Caco-2 (cell line): ENCODE measurements at regions of chr20 and their contacts with region 1.

Region 1: DNA sequence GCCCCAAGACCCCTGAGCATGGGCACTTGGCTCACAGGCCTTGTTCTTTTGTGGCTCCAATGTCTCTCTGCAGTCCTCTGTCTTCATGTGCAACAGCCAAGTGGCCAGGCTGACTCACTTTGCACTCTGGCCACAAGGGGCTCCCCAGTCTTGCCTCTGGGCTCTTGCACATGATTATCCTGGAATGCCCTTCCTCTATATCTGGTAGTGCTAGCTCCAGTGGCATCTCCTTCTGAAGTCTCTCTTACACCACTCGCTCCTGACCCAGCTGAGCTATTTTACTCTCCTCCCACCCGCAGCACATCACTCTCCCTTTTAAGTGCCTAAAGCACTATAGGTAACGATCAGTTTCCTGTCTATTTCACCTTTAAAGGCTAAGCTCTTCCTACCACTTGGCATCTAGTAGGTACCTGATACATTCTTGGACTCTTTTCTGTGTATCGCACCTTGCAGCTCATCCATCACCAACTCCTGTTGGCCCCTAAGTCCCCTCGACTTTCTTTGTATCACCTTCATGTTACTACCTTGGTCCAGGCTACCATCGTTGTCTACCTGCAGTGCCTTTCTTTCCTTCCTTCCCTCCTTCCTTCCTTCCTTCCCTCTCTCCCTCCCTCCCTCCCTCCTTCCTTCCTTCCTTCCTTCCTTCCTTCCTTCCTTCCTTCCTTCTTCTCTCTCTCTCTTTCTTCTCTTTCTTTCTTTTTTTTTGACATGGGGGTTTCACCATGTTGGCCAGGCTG is 211.9 kb upstream of the RNF24 start:
- DNase-seq: peak in 1 of 2 experiments; percentile 43
- H3K4me3 ChIP-seq: no peak overlapping the region
- H3K4me3 Mint-ChIP-seq: no peak overlapping the region
- H3K27ac Mint-ChIP-seq: no peak overlapping the region
- H3K4me1 ChIP-seq: peaks cover 30% of the 10 kb centered on the region
- H3K4me1 Mint-ChIP-seq: peaks cover 14% of the 10 kb centered on the region
- H3K27me3 ChIP-seq: no peaks in the 10 kb centered on the region
- H3K27me3 Mint-ChIP-seq: no peaks in the 10 kb centered on the region
- CTCF ChIP-seq: peak; percentile 22 to 26

Region 2: GRCh38 chr20:2364044-2364443 is 1863.2 kb before region 1 on chr20:
- CTCF ChIA-PET with region 1: no interaction called
- POLR2A ChIA-PET with region 1: no interaction called
- intact Hi-C with region 1: no loop called
- DNase-seq: no peak
- H3K4me3 ChIP-seq: no peak overlapping the region
- H3K4me3 Mint-ChIP-seq: no peak overlapping the region
- H3K27ac Mint-ChIP-seq: no peak overlapping the region
- H3K4me1 ChIP-seq: no peaks in the 10 kb centered on the region
- H3K4me1 Mint-ChIP-seq: no peaks in the 10 kb centered on the region
- H3K27me3 ChIP-seq: no peaks in the 10 kb centered on the region
- H3K27me3 Mint-ChIP-seq: peaks cover 16% of the 10 kb centered on the region
- CTCF ChIP-seq: no peak

Region 3: DNA sequence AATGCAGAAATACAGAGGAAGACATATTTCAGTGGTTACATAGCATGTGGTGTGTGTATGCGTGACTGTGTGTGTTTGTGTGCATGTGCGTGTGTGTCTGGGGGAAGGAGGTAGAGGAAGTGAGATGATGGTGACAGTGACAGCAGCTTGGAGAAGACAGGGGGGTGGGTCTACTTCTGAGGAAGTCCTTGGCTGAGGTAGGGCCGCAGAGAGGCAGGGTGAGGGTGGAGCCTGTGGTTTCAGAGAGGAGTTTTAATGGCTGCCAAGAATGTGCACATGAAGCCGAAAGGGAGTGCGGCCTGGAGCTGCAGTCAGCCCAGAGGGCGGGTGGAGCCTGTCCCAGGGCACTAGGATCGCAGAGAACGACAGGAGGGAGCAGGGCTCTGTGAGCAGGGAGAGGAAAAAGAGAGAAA is 189.2 kb before region 1 on chr20:
- CTCF ChIA-PET with region 1: no interaction called
- POLR2A ChIA-PET with region 1: no interaction called
- intact Hi-C with region 1: no loop called
- DNase-seq: peak in 1 of 2 experiments; percentile 21
- H3K4me3 ChIP-seq: no peak overlapping the region
- H3K4me3 Mint-ChIP-seq: no peak overlapping the region
- H3K27ac Mint-ChIP-seq: peak overlapping the region; percentile 56
- H3K4me1 ChIP-seq: peaks cover 8% of the 10 kb centered on the region
- H3K4me1 Mint-ChIP-seq: peaks cover 10% of the 10 kb centered on the region
- H3K27me3 ChIP-seq: no peaks in the 10 kb centered on the region
- H3K27me3 Mint-ChIP-seq: no peaks in the 10 kb centered on the region
- CTCF ChIP-seq: no peak

Region 4: DNA sequence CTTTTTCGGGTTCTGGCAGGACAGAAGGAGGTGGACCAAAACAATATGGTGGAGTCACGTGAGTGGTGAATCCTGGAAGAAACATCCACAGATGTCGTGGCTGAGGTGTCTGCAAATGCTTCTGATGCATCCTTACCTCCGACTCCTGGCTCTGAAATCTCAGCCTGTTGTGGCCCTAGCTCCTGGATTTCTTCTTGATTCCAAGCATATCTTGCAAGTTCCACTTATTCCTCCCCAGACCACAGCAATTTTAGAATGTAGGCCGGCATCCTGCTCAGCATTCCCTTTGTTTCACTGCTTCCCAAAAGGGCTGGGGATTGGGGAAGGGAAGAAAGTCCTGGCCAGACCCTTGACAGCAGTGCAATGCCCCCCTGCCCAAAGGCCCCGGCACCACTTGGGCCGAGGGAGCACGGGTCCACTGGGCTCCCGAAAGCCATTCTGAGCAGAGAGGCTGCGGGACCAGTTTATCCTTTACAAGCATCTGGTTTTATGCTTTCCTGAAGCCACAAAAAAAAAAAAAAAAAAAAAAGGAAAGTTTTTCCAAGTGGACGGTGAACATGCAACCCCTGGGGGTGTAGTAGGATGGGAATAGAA is 11.0 kb before region 1 on chr20:
- CTCF ChIA-PET with region 1: no interaction called
- POLR2A ChIA-PET with region 1: no interaction called
- intact Hi-C with region 1: no loop called
- DNase-seq: no peak
- H3K4me3 ChIP-seq: no peak overlapping the region
- H3K4me3 Mint-ChIP-seq: no peak overlapping the region
- H3K27ac Mint-ChIP-seq: peak overlapping the region; percentile 85
- H3K4me1 ChIP-seq: peaks cover 23% of the 10 kb centered on the region
- H3K4me1 Mint-ChIP-seq: peaks cover 22% of the 10 kb centered on the region
- H3K27me3 ChIP-seq: no peaks in the 10 kb centered on the region
- H3K27me3 Mint-ChIP-seq: no peaks in the 10 kb centered on the region
- CTCF ChIP-seq: no peak

Region 5: DNA sequence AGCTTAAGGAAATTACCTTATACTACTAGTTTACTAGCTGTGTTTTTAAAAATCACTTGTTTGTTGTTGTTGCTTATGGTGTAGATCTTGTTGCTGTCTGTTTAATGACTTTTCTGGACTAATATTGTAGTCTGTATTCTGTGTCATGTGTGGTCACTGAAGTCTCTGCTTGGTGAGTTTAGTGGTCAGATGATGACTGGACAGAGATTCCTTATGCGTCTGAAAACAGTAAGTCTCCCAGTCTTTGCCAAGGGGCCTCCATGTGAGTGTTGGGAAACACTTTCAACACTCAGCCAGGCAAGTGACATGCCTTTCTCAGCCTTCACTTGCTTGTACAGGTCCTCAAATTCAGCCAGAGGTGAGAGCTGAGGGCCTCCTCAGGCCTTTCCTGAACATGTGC is 45.0 kb after region 1 on chr20:
- CTCF ChIA-PET with region 1: no interaction called
- POLR2A ChIA-PET with region 1: interaction called, 11 read pairs
- intact Hi-C with region 1: no loop called
- DNase-seq: no peak
- H3K4me3 ChIP-seq: no peak overlapping the region
- H3K4me3 Mint-ChIP-seq: no peak overlapping the region
- H3K27ac Mint-ChIP-seq: no peak overlapping the region
- H3K4me1 ChIP-seq: no peaks in the 10 kb centered on the region
- H3K4me1 Mint-ChIP-seq: no peaks in the 10 kb centered on the region
- H3K27me3 ChIP-seq: no peaks in the 10 kb centered on the region
- H3K27me3 Mint-ChIP-seq: peaks cover 9% of the 10 kb centered on the region
- CTCF ChIP-seq: no peak

Region 6: GRCh38 chr20:4607287-4607713 is 380.0 kb after region 1 on chr20:
- CTCF ChIA-PET with region 1: no interaction called
- POLR2A ChIA-PET with region 1: no interaction called
- intact Hi-C with region 1: no loop called
- DNase-seq: peak; percentile 61 to 74
- H3K4me3 ChIP-seq: no peak overlapping the region
- H3K4me3 Mint-ChIP-seq: no peak overlapping the region
- H3K27ac Mint-ChIP-seq: no peak overlapping the region
- H3K4me1 ChIP-seq: no peaks in the 10 kb centered on the region
- H3K4me1 Mint-ChIP-seq: no peaks in the 10 kb centered on the region
- H3K27me3 ChIP-seq: no peaks in the 10 kb centered on the region; the same call in none of the 2 replicates
- H3K27me3 Mint-ChIP-seq: peaks cover 25% of the 10 kb centered on the region
- CTCF ChIP-seq: peak; percentile 85 to 93